ENCODE measurements at regions of chrX and their contacts with region 1.

Region 1: GRCh38 chrX:109911046-109911445 is 91.9 kb upstream of the TMEM164 start:
- DNase-seq: no peak
- ATAC-seq: no peak
- H3K4me3 ChIP-seq: no peak overlapping the region
- H3K27ac ChIP-seq: no peak overlapping the region
- H3K4me1 ChIP-seq: peaks cover 0 to 4% of the 10 kb centered on the region in 2 experiments; a peak in 1 of 5 replicates
- H3K27me3 ChIP-seq: no peaks in the 10 kb centered on the region
- CTCF ChIP-seq: peak; percentile 13 to 62 (median 44); a peak in 3 of 6 replicates
- EP300 ChIP-seq: no peak
- POLR2A ChIP-seq: no peak
- RAD21 ChIP-seq: peak; percentile 60 to 74

Region 2: DNA sequence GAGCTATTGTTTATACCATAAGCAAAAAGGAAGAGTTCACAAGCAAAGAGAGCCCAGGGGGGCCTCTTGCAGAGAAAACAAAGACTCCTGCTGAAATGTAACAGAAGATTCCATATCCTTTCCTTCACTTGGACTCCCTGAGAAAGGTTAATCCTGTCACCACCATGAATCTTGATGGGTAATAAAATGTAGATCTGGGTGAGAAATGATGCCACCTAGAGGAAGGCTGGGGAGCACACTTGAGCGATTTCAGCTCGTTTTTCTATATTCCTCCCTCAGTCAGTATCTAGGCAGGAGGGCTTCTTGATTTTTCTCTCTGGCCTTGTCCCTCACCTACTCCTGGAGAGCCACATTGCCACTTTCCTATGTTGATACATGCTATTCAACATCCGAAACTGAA is 275.9 kb before region 1 on chrX:
- CTCF ChIA-PET with region 1: no interaction called
- POLR2A ChIA-PET with region 1: no interaction called
- in situ Hi-C with region 1: no loop called
- intact Hi-C with region 1: no loop called
- DNase-seq: peak; percentile 20 to 34 (median 24)
- ATAC-seq: peak; percentile 85
- H3K4me3 ChIP-seq: no peak overlapping the region
- H3K27ac ChIP-seq: no peak overlapping the region
- H3K4me1 ChIP-seq: no peaks in the 10 kb centered on the region
- H3K27me3 ChIP-seq: no peaks in the 10 kb centered on the region
- CTCF ChIP-seq: peak; percentile 51 to 64 (median 57); a peak in 5 of 6 replicates
- EP300 ChIP-seq: no peak
- POLR2A ChIP-seq: no peak
- RAD21 ChIP-seq: no peak

Region 3: GRCh38 chrX:109782994-109783700 is 127.9 kb before region 1 on chrX:
- CTCF ChIA-PET with region 1: no interaction called
- POLR2A ChIA-PET with region 1: no interaction called
- in situ Hi-C with region 1: no loop called
- intact Hi-C with region 1: no loop called
- DNase-seq: no peak
- ATAC-seq: no peak
- H3K4me3 ChIP-seq: no peak overlapping the region
- H3K27ac ChIP-seq: no peak overlapping the region
- H3K4me1 ChIP-seq: no peaks in the 10 kb centered on the region; a peak in 1 of 5 replicates
- H3K27me3 ChIP-seq: no peaks in the 10 kb centered on the region
- CTCF ChIP-seq: no peak
- EP300 ChIP-seq: no peak
- POLR2A ChIP-seq: no peak
- RAD21 ChIP-seq: no peak

Region 4: GRCh38 chrX:109952984-109953905 is 42.2 kb after region 1 on chrX:
- CTCF ChIA-PET with region 1: no interaction called
- POLR2A ChIA-PET with region 1: no interaction called
- in situ Hi-C with region 1: no loop called
- intact Hi-C with region 1: no loop called
- DNase-seq: no peak
- ATAC-seq: peak; percentile 53
- H3K4me3 ChIP-seq: no peak overlapping the region
- H3K27ac ChIP-seq: peak overlapping the region; percentile 5; the same call in 2 of the 3 replicates
- H3K4me1 ChIP-seq: peaks cover 0 to 43% of the 10 kb centered on the region in 2 experiments; a peak in 4 of 5 replicates
- H3K27me3 ChIP-seq: no peaks in the 10 kb centered on the region
- CTCF ChIP-seq: no peak
- EP300 ChIP-seq: no peak
- POLR2A ChIP-seq: no peak
- RAD21 ChIP-seq: no peak

Region 5: GRCh38 chrX:110060846-110061537 is 149.9 kb after region 1 on chrX:
- CTCF ChIA-PET with region 1: no interaction called
- POLR2A ChIA-PET with region 1: no interaction called
- in situ Hi-C with region 1: no loop called
- intact Hi-C with region 1: no loop called
- DNase-seq: no peak
- ATAC-seq: no peak
- H3K4me3 ChIP-seq: no peak overlapping the region
- H3K27ac ChIP-seq: no peak overlapping the region
- H3K4me1 ChIP-seq: peaks cover 0 to 2% of the 10 kb centered on the region in 2 experiments; a peak in 1 of 5 replicates
- H3K27me3 ChIP-seq: no peaks in the 10 kb centered on the region
- CTCF ChIP-seq: no peak
- EP300 ChIP-seq: no peak
- POLR2A ChIP-seq: no peak
- RAD21 ChIP-seq: no peak

Region 6: GRCh38 chrX:110125446-110126162 is 214.6 kb after region 1 on chrX:
- CTCF ChIA-PET with region 1: no interaction called
- POLR2A ChIA-PET with region 1: no interaction called
- in situ Hi-C with region 1: no loop called
- intact Hi-C with region 1: loop called (anchors 1 kb)
- DNase-seq: peak in 1 of 4 experiments; percentile 20
- ATAC-seq: peak; percentile 79
- H3K4me3 ChIP-seq: no peak overlapping the region
- H3K27ac ChIP-seq: no peak overlapping the region
- H3K4me1 ChIP-seq: no peaks in the 10 kb centered on the region
- H3K27me3 ChIP-seq: no peaks in the 10 kb centered on the region
- CTCF ChIP-seq: peak; percentile 12 to 41 (median 36); a peak in 2 of 6 replicates
- EP300 ChIP-seq: no peak
- POLR2A ChIP-seq: no peak
- RAD21 ChIP-seq: peak in 1 of 2 experiments; percentile 61; a peak in 2 of 4 replicates

Region 7: GRCh38 chrX:110412971-110413721 is 502.1 kb after region 1 on chrX:
- CTCF ChIA-PET with region 1: interaction called, 3 read pairs
- POLR2A ChIA-PET with region 1: no interaction called
- in situ Hi-C with region 1: loop called (anchors 25 kb)
- intact Hi-C with region 1: loop called (anchors 10 kb)
- DNase-seq: peak; percentile 82 to 89 (median 84)
- ATAC-seq: peak; percentile 91
- H3K4me3 ChIP-seq: no peak overlapping the region
- H3K27ac ChIP-seq: no peak overlapping the region
- H3K4me1 ChIP-seq: peaks cover 32 to 37% of the 10 kb centered on the region in 2 experiments; a peak in 4 of 5 replicates
- H3K27me3 ChIP-seq: no peaks in the 10 kb centered on the region
- CTCF ChIP-seq: peak; percentile 84 to 89 (median 85)
- EP300 ChIP-seq: no peak
- POLR2A ChIP-seq: no peak
- RAD21 ChIP-seq: peak; percentile 65 to 81